Activated CD4-positive, alpha-beta T cell treated with anti-CD3 and anti-CD28 coated beads for 36 hours (primary cell): ENCODE measurements at regions of chr7 and their contacts with region 1.

Region 1: GRCh38 chr7:38524786-38525185 is 106.4 kb downstream of the AMPH start:
- DNase-seq: no peak
- ATAC-seq: no peak
- H3K4me3 Mint-ChIP-seq: no peak overlapping the region
- H3K27ac Mint-ChIP-seq: no peak overlapping the region
- H3K4me1 Mint-ChIP-seq: no peaks in the 10 kb centered on the region
- H3K27me3 Mint-ChIP-seq: no peaks in the 10 kb centered on the region

Region 2: GRCh38 chr7:38492010-38492409 is 32.8 kb before region 1 on chr7:
- CTCF ChIA-PET with region 1: no interaction called
- POLR2A ChIA-PET with region 1: no interaction called
- intact Hi-C with region 1: loop called in 1 of 2 experiments (anchors 2 kb)
- DNase-seq: no peak
- ATAC-seq: no peak
- H3K4me3 Mint-ChIP-seq: no peak overlapping the region
- H3K27ac Mint-ChIP-seq: no peak overlapping the region
- H3K4me1 Mint-ChIP-seq: no peaks in the 10 kb centered on the region
- H3K27me3 Mint-ChIP-seq: peaks cover 8% of the 10 kb centered on the region